Activated CD4-positive, alpha-beta T cell treated with anti-CD3 and anti-CD28 coated beads, Interleukin-2, amount 10 ng/mL, durations not matched to agents 24 days and 14 days (primary cell): ENCODE measurements at regions of chrX and their contacts with region 1.

Region 1: GRCh38 chrX:23637187-23637586 is 30.1 kb upstream of the PRDX4 start:
- DNase-seq: peak; percentile 85
- H3K4me3 Mint-ChIP-seq: no peak overlapping the region
- H3K27ac Mint-ChIP-seq: no peak overlapping the region
- H3K4me1 Mint-ChIP-seq: no peaks in the 10 kb centered on the region
- H3K27me3 Mint-ChIP-seq: peaks cover 8% of the 10 kb centered on the region

Region 2: GRCh38 chrX:23694606-23695005 is 57.4 kb after region 1 on chrX:
- intact Hi-C with region 1: loop called (anchors 5 kb)
- DNase-seq: peak; percentile 76
- H3K4me3 Mint-ChIP-seq: no peak overlapping the region
- H3K27ac Mint-ChIP-seq: no peak overlapping the region
- H3K4me1 Mint-ChIP-seq: no peaks in the 10 kb centered on the region
- H3K27me3 Mint-ChIP-seq: no peaks in the 10 kb centered on the region